IMR-90 (cell line): ENCODE measurements at regions of chr12 and their contacts with region 1.

Region 1: DNA sequence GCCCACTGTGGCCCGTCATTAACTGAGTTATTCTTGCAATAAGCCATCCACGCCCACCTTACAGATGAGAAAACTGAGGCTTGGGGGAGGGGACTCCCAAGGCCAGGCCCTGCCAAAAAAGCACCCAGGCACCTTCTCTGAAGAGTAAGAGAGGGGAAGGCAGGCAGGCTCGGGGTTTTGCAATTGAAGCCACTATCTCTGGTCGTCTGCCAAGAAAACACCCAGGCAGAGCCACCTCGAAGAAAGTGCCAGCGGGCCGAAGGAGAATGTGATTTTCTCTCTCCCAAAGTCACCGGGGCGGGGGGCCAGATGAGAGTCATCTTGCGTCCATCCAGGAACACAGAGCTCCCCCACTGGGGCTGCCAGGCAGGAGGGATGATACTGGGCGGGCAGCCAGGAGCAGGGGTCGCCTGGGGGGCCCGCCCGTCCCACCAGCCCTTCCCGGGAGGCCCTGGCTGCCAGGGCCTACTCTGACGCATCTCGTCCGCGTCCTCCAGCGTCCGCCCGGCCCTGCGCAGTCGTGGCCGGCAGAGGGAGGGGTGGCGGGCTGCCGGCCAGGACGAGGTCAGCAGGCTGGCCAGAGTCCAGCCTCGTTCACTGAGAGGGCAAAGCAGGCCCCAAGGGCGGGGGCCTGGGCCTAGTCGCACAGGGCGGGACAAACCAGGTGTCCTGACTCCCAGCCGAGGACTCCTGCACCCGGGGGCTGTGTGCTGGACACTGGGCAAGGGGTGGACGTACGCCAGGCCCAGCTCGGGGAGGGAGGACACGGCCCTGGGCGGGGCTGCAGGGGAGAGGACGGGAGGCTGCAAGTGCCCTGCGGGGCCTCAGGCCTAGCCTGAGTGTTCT is 74.4 kb downstream of the RFLNA start:
- DNase-seq: peak; percentile 92
- ATAC-seq: peak; percentile 92
- H3K4me3 ChIP-seq: no peak overlapping the region
- H3K27ac ChIP-seq: peak overlapping the region; percentile 90
- H3K4me1 ChIP-seq: peaks cover 21% of the 10 kb centered on the region
- H3K27me3 ChIP-seq: no peaks in the 10 kb centered on the region
- CTCF ChIP-seq: peak; percentile 57
- POLR2A ChIP-seq: no peak
- RAD21 ChIP-seq: peak; percentile 53

Region 2: GRCh38 chr12:124754949-124755800 is 385.9 kb after region 1 on chr12:
- CTCF ChIA-PET with region 1: no interaction called
- POLR2A ChIA-PET with region 1: no interaction called
- dilution Hi-C with region 1: no loop called
- in situ Hi-C with region 1: no loop called
- intact Hi-C with region 1: loop called (anchors 5 kb)
- DNase-seq: peak; percentile 67
- ATAC-seq: peak; percentile 92
- H3K4me3 ChIP-seq: no peak overlapping the region
- H3K27ac ChIP-seq: peak overlapping the region; percentile 57; the same call in 1 of the 2 replicates
- H3K4me1 ChIP-seq: peaks cover 11% of the 10 kb centered on the region; the same call in 1 of the 2 replicates
- H3K27me3 ChIP-seq: peaks cover 7% of the 10 kb centered on the region; the same call in 1 of the 2 replicates
- CTCF ChIP-seq: no peak
- POLR2A ChIP-seq: no peak
- RAD21 ChIP-seq: no peak